ENCODE measurements at regions of chr15 and their contacts with region 1.

Region 1: DNA sequence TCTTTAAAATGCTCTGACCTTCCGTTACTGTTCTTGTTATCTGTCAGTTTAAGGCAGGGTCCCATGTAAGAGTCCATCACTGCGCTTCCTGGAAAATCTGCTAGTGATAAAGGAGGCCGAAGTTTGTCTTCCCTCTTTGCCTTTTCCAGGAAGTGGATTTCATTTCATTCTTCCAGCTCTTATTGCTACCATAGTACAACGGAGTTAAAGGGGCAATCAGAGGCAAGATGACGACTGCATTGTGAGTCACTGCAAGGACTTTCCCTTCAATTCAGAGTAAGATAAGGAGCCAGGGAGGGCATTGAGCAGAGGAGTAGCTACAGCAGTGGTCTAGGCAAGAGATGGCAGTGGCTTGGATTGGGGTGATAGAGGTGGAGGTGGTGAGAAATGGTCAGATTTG is 17.2 kb upstream of the DET1 start:
- DNase-seq: no peak
- ATAC-seq: no peak

Region 2: GRCh38 chr15:88489321-88489720 is 74.3 kb before region 1 on chr15:
- intact Hi-C with region 1: loop called (anchors 2 kb)
- DNase-seq: no peak
- ATAC-seq: no peak